H1 (cell line): ENCODE measurements at regions of chr5 and their contacts with region 1.

Region 1: DNA sequence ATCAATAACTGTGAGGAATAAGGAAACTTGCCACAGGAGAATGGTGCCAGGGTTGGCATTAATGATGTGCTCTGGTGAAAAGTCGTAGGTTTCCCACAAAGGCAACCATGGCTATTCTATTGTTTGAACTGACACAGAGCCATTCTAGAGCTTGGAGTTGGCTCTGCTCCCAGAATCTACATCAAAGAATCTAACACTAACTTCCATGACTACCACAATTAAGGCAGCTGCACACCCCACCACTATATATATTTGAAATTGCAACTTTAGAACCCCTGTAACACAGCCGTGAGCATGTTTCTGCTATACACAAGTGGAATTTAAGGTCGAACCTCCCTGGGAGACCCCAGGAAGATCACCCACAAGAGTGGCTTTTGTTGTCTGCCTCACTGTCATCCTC is 89.7 kb upstream of the CCDC152 start:
- DNase-seq: no peak
- H3K4me3 ChIP-seq: no peak overlapping the region
- H3K27ac ChIP-seq: no peak overlapping the region
- H3K4me1 ChIP-seq: no peaks in the 10 kb centered on the region
- H3K27me3 ChIP-seq: no peaks in the 10 kb centered on the region
- CTCF ChIP-seq: no peak
- EP300 ChIP-seq: no peak
- POLR2A ChIP-seq: no peak
- RAD21 ChIP-seq: no peak

Region 2: GRCh38 chr5:42621242-42621641 is 45.6 kb before region 1 on chr5:
- CTCF ChIA-PET with region 1: no interaction called
- POLR2A ChIA-PET with region 1: no interaction called
- DNase-seq: no peak
- H3K4me3 ChIP-seq: no peak overlapping the region
- H3K27ac ChIP-seq: no peak overlapping the region
- H3K4me1 ChIP-seq: no peaks in the 10 kb centered on the region
- H3K27me3 ChIP-seq: no peaks in the 10 kb centered on the region
- CTCF ChIP-seq: no peak
- EP300 ChIP-seq: no peak
- POLR2A ChIP-seq: no peak
- RAD21 ChIP-seq: no peak

Region 3: DNA sequence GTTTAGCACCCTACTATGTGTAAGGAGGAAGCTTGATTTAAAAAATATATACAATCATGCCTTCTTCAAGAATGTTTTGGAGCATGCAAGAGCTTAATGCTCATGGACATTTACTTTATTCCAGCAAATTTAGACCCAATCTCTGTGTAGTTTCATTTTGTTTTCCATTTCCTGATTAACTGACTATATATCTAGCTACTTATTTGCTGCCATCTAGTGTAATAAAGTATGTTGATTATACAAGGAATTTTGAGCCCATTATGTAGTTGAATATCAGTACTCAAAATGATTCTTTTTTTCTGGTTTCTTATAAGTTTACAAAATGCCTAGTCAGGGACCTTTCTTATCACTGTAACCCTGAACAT is 10.2 kb before region 1 on chr5:
- CTCF ChIA-PET with region 1: interaction called, 17 read pairs
- POLR2A ChIA-PET with region 1: no interaction called
- DNase-seq: no peak
- H3K4me3 ChIP-seq: no peak overlapping the region
- H3K27ac ChIP-seq: no peak overlapping the region
- H3K4me1 ChIP-seq: no peaks in the 10 kb centered on the region
- H3K27me3 ChIP-seq: no peaks in the 10 kb centered on the region
- CTCF ChIP-seq: no peak
- EP300 ChIP-seq: no peak
- POLR2A ChIP-seq: no peak
- RAD21 ChIP-seq: no peak